Left ventricle myocardium superior (tissue), 1 donor: ENCODE measurements at regions of chr15 and their contacts with region 1.

Region 1: GRCh38 chr15:98727115-98728085 is 79.1 kb downstream of the IGF1R start:
- DNase-seq: peak; percentile 89
- ATAC-seq: peak; percentile 89

Region 2: GRCh38 chr15:98671060-98672008 is 56.1 kb before region 1 on chr15:
- intact Hi-C with region 1: loop called (anchors 10 kb)
- DNase-seq: no peak
- ATAC-seq: no peak

Region 3: GRCh38 chr15:98805434-98806274 is 78.3 kb after region 1 on chr15:
- intact Hi-C with region 1: no loop called
- DNase-seq: no peak
- ATAC-seq: no peak